Naive thymus-derived CD4-positive, alpha-beta T cell (primary cell): ENCODE measurements at regions of chr17 and their contacts with region 1.

Region 1: DNA sequence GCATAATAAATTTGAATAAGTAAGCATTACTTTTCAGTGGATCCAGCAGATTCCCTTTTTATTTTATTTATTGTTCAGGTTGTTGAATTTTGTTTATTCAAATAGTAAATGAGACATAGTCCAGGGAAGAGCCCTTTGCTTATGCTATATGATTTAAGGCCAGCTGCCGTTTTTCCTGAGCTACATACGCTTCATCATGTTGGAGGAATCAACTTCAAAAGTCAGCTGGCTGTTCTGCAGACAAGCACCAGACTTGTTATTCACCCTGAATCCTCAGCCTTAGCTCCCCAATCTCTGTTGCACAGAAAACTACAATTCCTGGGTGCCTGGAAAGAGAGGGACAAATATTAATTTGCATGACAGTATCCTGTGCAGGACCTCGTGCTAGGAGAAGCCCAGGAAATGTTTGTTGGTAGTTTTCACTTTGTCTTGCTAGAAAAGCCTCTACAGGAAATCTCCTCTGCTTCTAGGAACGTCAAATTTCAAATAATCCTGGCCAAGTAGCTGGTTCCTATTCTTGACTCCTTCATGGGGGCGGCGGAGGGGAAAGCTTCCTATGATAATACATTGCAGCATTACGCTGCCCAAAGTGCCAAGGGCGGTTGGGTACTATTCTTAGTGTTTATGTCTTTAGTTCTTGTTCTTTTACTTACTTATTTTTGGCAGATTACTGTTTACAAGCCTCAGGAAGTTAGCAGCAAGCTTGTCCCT is 101.6 kb downstream of the PRKCA start:
- DNase-seq: peak in 2 of 9 donors; percentile 20
- ATAC-seq: no peak
- H3K4me3 ChIP-seq: no peak overlapping the region
- H3K4me3 Mint-ChIP-seq: peak overlapping the region; percentile 67 to 85 (median 72)
- H3K27ac ChIP-seq: peak overlapping the region; percentile 14
- H3K27ac Mint-ChIP-seq: peak overlapping the region; percentile 58 to 97 (median 89)
- H3K4me1 ChIP-seq: peaks cover 14 to 82% of the 10 kb centered on the region in 2 donors
- H3K4me1 Mint-ChIP-seq: peaks cover 69 to 96% (median 90%) of the 10 kb centered on the region in 7 donors
- H3K27me3 ChIP-seq: no peaks in the 10 kb centered on the region
- H3K27me3 Mint-ChIP-seq: no peaks in the 10 kb centered on the region

Region 2: GRCh38 chr17:66310528-66311148 is 93.4 kb before region 1 on chr17:
- CTCF ChIA-PET with region 1: no interaction called
- POLR2A ChIA-PET with region 1: no interaction called
- intact Hi-C with region 1: loop called in 1 of 2 experiments (anchors 2 kb)
- DNase-seq: peak in 1 of 9 donors; percentile 37
- ATAC-seq: no peak
- H3K4me3 ChIP-seq: no peak overlapping the region
- H3K4me3 Mint-ChIP-seq: peak overlapping the region in 9 of 10 donors; percentile 2 to 99 (median 51)
- H3K27ac ChIP-seq: peak overlapping the region; percentile 31
- H3K27ac Mint-ChIP-seq: peak overlapping the region; percentile 21 to 98 (median 88)
- H3K4me1 ChIP-seq: peaks cover 11 to 68% of the 10 kb centered on the region in 2 donors
- H3K4me1 Mint-ChIP-seq: peaks cover 56 to 100% (median 94%) of the 10 kb centered on the region in 7 donors
- H3K27me3 ChIP-seq: no peaks in the 10 kb centered on the region
- H3K27me3 Mint-ChIP-seq: no peaks in the 10 kb centered on the region

Region 3: DNA sequence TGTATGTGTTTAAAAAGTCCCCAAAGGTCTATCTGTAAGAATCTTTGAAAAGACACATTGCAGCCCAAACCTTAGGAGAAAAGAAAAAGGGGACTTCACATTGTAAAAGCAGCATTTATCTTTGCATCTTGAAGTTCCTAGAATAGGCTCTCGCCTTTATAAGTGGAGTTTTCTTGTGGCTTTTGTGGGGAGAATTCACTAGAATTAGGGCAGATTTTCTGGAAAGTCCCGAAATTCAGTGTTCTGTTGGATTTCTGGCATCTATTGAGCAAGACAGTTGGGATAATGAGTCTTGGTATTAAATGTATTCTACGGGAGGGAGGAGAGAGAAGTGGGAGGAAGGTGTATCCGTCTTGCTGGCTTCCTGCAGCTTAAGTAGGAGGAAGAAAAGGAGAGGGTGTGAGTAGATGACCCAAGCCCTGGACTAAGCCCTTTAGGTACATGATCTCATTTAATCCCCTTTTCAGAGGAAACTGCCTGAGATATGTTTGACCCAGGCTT is 39.0 kb before region 1 on chr17:
- CTCF ChIA-PET with region 1: no interaction called
- POLR2A ChIA-PET with region 1: interaction called, 3 read pairs
- intact Hi-C with region 1: loop called in 1 of 2 experiments (anchors 1 kb)
- DNase-seq: no peak
- ATAC-seq: no peak
- H3K4me3 ChIP-seq: no peak overlapping the region
- H3K4me3 Mint-ChIP-seq: peak overlapping the region in 9 of 10 donors; percentile 15 to 70 (median 52)
- H3K27ac ChIP-seq: no peak overlapping the region
- H3K27ac Mint-ChIP-seq: peak overlapping the region; percentile 7 to 83 (median 63)
- H3K4me1 ChIP-seq: peaks cover 0 to 45% of the 10 kb centered on the region in 2 donors
- H3K4me1 Mint-ChIP-seq: peaks cover 52 to 97% (median 91%) of the 10 kb centered on the region in 7 donors
- H3K27me3 ChIP-seq: no peaks in the 10 kb centered on the region
- H3K27me3 Mint-ChIP-seq: no peaks in the 10 kb centered on the region

Region 4: DNA sequence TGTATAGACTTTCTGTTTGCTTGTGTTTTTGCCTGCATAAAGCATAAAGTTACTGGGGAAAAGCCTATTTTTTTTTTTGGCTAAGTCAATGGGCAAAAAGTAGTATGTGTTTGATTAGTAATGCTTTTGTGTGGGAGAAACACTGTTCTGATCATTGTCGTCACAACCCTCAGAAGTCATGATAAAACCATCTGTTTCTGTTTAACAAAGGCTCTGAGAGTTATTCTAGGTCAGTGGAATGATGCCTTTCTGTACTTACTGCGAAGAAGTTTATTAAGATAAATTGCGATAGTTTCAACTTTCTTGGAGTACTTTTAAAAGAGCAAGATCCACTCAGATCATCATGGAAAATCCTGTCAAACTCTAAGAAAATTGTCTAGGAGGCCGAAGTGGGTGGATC is 20.7 kb before region 1 on chr17:
- CTCF ChIA-PET with region 1: interaction called, 4 read pairs
- POLR2A ChIA-PET with region 1: interaction called, 3 read pairs
- intact Hi-C with region 1: loop called in 1 of 2 experiments (anchors 2 kb)
- DNase-seq: no peak
- ATAC-seq: no peak
- H3K4me3 ChIP-seq: no peak overlapping the region
- H3K4me3 Mint-ChIP-seq: peak overlapping the region in 1 of 10 donors; percentile 29
- H3K27ac ChIP-seq: no peak overlapping the region
- H3K27ac Mint-ChIP-seq: peak overlapping the region in 4 of 9 donors; percentile 3 to 66 (median 18)
- H3K4me1 ChIP-seq: peaks cover 0 to 23% of the 10 kb centered on the region in 2 donors
- H3K4me1 Mint-ChIP-seq: peaks cover 25 to 89% (median 77%) of the 10 kb centered on the region in 7 donors
- H3K27me3 ChIP-seq: no peaks in the 10 kb centered on the region
- H3K27me3 Mint-ChIP-seq: no peaks in the 10 kb centered on the region

Region 5: GRCh38 chr17:66415366-66416206 is 11.6 kb after region 1 on chr17:
- CTCF ChIA-PET with region 1: interaction called, 7 read pairs
- POLR2A ChIA-PET with region 1: interaction called, 9 read pairs
- intact Hi-C with region 1: loop called in 1 of 2 experiments (anchors 1 kb)
- DNase-seq: peak in 1 of 9 donors; percentile 29
- ATAC-seq: no peak
- H3K4me3 ChIP-seq: peak overlapping the region; percentile 2
- H3K4me3 Mint-ChIP-seq: peak overlapping the region; percentile 20 to 80 (median 74)
- H3K27ac ChIP-seq: no peak overlapping the region
- H3K27ac Mint-ChIP-seq: peak overlapping the region; percentile 28 to 94 (median 72)
- H3K4me1 ChIP-seq: peaks cover 0 to 54% of the 10 kb centered on the region in 2 donors
- H3K4me1 Mint-ChIP-seq: peaks cover 27 to 87% (median 70%) of the 10 kb centered on the region in 7 donors
- H3K27me3 ChIP-seq: no peaks in the 10 kb centered on the region
- H3K27me3 Mint-ChIP-seq: no peaks in the 10 kb centered on the region